ENCODE measurements at regions of chr7 and their contacts with region 1.

Region 1: GRCh38 chr7:55018361-55019190 is at the start of gene EGFR:
- DNase-seq: peak; percentile 86
- H3K4me3 ChIP-seq: peak within 1 kb of the TSS; percentile 57 to 92
- H3K27ac ChIP-seq: peak within 1 kb of the TSS; percentile 95 to 96
- H3K4me1 ChIP-seq: peaks cover 3% of the 10 kb centered on the region
- H3K27me3 ChIP-seq: no peaks in the 10 kb centered on the region
- CTCF ChIP-seq: no peak
- POLR2A ChIP-seq: peak; percentile 85
- total RNA-seq, gene EGFR: 78.3 to 112 TPM

Region 2: GRCh38 chr7:54788664-54789063 is 229.9 kb before region 1 on chr7:
- intact Hi-C with region 1: loop called (anchors 10 kb)
- DNase-seq: peak; percentile 49
- H3K4me3 ChIP-seq: no peak overlapping the region
- H3K27ac ChIP-seq: no peak overlapping the region
- H3K4me1 ChIP-seq: no peaks in the 10 kb centered on the region
- H3K27me3 ChIP-seq: no peaks in the 10 kb centered on the region
- CTCF ChIP-seq: peak in 3 of 4 experiments; percentile 51 to 75 (median 73)
- POLR2A ChIP-seq: no peak

Region 3: GRCh38 chr7:55053651-55054571 is 35.3 kb after region 1 on chr7:
- intact Hi-C with region 1: no loop called
- DNase-seq: peak; percentile 73
- H3K4me3 ChIP-seq: no peak overlapping the region
- H3K27ac ChIP-seq: peak overlapping the region; percentile 63 to 72
- H3K4me1 ChIP-seq: peaks cover 5% of the 10 kb centered on the region
- H3K27me3 ChIP-seq: no peaks in the 10 kb centered on the region
- CTCF ChIP-seq: peak in 2 of 4 experiments; percentile 44 to 54
- POLR2A ChIP-seq: no peak

Region 4: DNA sequence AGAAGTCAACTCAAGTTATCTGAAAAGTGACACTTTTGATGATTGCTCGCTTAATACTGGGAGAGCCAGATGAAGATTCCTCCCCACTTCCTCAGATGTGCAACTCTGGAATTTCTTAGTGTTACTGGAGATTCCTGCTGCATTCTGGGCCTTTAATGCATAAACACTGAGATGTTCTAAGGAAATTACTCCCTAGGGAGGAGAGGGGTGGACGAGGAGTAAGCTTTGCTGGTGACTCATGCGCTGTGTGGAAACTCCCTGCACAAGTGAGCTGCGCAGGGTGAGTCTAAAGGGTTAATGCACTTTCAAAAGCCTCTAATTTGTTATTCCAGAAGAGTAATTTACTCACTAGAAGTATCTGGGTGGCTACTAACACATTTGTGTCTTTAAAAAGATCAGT is 46.5 kb after region 1 on chr7:
- intact Hi-C with region 1: loop called (anchors 5 kb)
- DNase-seq: no peak
- H3K4me3 ChIP-seq: no peak overlapping the region
- H3K27ac ChIP-seq: peak overlapping the region; percentile 38 to 56
- H3K4me1 ChIP-seq: no peaks in the 10 kb centered on the region
- H3K27me3 ChIP-seq: no peaks in the 10 kb centered on the region
- CTCF ChIP-seq: no peak
- POLR2A ChIP-seq: no peak

Region 5: GRCh38 chr7:55132890-55133551 is 114.4 kb after region 1 on chr7:
- intact Hi-C with region 1: loop called (anchors 2 kb)
- DNase-seq: no peak
- H3K4me3 ChIP-seq: no peak overlapping the region
- H3K27ac ChIP-seq: no peak overlapping the region
- H3K4me1 ChIP-seq: peaks cover 13% of the 10 kb centered on the region
- H3K27me3 ChIP-seq: no peaks in the 10 kb centered on the region
- CTCF ChIP-seq: no peak
- POLR2A ChIP-seq: no peak

Region 6: DNA sequence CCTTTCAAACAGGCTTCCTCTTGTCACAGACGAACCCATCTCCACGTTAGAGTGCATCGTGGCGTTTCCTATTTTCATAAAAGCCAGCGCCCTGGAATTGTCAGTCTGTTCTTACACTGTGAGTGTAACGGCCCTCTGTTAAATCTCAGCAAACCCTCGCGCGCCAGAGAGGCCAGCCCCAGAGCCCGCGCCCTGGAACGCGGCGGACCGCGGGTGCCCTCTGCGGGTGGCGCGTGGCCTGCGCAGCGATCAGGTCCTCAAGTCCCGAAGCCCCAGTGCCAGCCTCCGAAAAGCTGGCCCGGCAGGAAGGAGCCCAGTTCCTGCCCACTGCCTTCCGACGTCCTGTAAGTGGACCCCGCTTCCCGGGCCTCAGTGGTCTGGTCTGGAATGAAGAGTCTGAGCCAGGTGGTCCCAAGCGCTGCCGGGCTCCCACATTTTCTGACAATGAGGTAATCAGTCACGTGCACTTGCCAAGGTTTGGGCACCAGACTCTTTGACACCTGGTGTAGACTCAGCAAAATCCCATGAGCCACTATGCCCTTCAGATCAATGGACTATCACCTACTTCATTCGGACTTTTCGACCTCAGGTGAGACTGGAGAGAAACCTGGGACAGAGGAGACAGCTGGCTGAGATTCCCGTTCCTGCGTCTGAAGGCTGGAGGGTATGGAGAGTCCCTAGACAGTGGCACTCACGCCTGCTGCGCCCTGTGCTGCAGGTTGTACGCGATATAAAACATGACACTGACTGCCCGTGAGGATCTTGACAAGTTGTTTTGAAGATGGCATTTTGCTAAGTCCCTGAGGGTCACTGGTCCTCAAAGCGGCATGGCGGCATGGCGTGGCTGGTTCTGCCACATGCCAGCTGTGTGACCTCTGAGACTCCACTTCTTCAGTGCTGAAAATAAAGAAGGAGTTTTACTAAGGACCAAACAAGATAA is 237.2 kb after region 1 on chr7:
- intact Hi-C with region 1: loop called (anchors 2 kb)
- DNase-seq: peak; percentile 87
- H3K4me3 ChIP-seq: peak overlapping the region; percentile 44 to 51
- H3K27ac ChIP-seq: peak overlapping the region; percentile 50 to 59
- H3K4me1 ChIP-seq: peaks cover 3% of the 10 kb centered on the region
- H3K27me3 ChIP-seq: no peaks in the 10 kb centered on the region
- CTCF ChIP-seq: peak; percentile 60 to 95 (median 87)
- POLR2A ChIP-seq: no peak

Region 7: DNA sequence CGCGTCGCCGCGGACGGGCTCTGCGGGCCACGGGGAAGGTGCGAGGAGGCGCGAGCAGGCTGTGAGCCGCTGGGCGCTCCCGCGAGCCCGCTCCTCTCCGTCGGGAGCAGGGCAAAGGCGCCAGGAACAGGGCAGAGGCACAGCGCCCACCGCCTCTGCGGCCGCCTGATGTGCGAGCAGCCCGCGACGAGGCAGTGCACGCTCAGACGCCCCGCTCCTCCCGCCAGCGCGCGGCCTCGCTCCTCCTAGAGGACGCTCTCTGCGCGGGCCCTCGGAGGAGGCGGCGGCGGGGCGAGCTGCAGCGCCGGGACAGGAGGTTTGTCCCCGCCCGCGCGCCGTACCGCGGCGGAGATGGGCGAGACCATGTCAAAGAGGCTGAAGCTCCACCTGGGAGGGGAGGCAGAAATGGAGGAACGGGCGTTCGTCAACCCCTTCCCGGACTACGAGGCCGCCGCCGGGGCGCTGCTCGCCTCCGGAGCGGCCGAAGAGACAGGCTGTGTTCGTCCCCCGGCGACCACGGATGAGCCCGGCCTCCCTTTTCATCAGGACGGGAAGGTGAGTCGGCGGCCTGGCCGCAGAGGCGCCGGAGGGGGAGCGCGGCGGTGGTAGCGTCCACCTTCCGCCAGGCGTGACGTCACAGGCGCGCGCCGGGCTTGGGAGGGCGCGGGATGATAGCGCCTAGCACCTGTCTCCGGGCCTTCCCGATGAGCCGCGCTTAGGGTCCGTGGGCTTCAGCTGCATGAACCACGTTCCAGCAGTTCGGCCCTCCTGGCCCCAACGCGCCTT is 347.3 kb after region 1 on chr7:
- intact Hi-C with region 1: loop called (anchors 10 kb)
- DNase-seq: peak; percentile 94
- H3K4me3 ChIP-seq: peak overlapping the region; percentile 68 to 83
- H3K27ac ChIP-seq: peak overlapping the region; percentile 95 to 98
- H3K4me1 ChIP-seq: no peaks in the 10 kb centered on the region
- H3K27me3 ChIP-seq: no peaks in the 10 kb centered on the region
- CTCF ChIP-seq: peak; percentile 22 to 51 (median 40)
- POLR2A ChIP-seq: peak; percentile 59